ENCODE measurements at regions of chr11 and their contacts with region 1.

Region 1: GRCh38 chr11:128956401-128957201 is 13.9 kb upstream of the TP53AIP1 start:
- DNase-seq: peak; percentile 74
- ATAC-seq: peak; percentile 88
- H3K4me3 ChIP-seq: no peak overlapping the region
- H3K27ac ChIP-seq: peak overlapping the region; percentile 10; the same call in 1 of the 2 replicates
- H3K4me1 ChIP-seq: no peaks in the 10 kb centered on the region
- H3K27me3 ChIP-seq: no peaks in the 10 kb centered on the region
- CTCF ChIP-seq: peak; percentile 80

Region 2: DNA sequence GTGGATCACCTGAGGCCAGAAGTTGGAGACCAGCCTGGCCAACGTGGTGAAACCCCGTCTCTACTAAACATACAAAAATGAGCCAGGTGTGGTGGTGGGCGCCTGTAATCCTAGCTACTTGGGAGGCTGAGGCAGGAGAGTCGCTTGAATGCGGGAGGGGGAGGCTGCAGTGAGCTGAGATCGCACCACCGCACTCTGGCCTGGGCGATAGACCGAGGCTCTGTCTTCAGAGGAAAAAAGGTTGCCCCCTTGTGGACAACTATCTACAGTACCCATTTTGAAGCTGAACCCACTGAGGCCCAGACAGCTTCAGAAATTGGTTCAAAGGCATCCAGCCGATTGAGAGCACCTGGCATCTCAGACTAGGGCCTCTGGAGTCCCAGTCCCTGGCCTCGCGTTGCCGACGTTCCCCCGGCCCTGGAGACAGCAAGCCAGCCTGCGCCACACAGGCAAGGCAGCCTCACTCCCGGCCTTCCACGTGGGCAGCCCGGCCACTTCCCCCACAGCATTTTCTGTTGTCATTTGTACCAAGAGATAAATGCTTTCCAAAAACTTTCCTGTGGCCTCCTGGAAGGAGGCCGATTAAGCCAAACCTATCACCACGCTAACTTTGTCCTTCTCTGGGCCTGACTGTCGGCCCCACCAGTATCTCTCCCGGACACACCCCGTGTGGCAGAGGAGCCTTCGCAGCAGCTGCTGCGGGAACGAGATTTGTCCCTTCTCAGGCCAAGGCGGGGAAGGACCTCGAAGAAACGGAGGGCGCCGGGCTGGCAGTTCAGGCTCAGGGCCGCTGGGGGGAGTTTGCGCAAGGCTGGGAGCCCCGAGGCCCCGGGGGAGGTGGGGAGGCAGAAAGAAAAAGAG is 179.9 kb before region 1 on chr11:
- CTCF ChIA-PET with region 1: interaction called, 16 read pairs
- POLR2A ChIA-PET with region 1: no interaction called
- in situ Hi-C with region 1: no loop called
- intact Hi-C with region 1: no loop called
- DNase-seq: no peak
- ATAC-seq: peak; percentile 82
- H3K4me3 ChIP-seq: no peak overlapping the region
- H3K27ac ChIP-seq: no peak overlapping the region
- H3K4me1 ChIP-seq: no peaks in the 10 kb centered on the region
- H3K27me3 ChIP-seq: no peaks in the 10 kb centered on the region
- CTCF ChIP-seq: peak; percentile 86

Region 3: GRCh38 chr11:128884703-128885338 is 71.8 kb before region 1 on chr11:
- CTCF ChIA-PET with region 1: interaction called, 53 read pairs
- POLR2A ChIA-PET with region 1: no interaction called
- in situ Hi-C with region 1: no loop called
- intact Hi-C with region 1: loop called (anchors 1 kb)
- DNase-seq: peak; percentile 69
- ATAC-seq: peak; percentile 90
- H3K4me3 ChIP-seq: no peak overlapping the region
- H3K27ac ChIP-seq: no peak overlapping the region
- H3K4me1 ChIP-seq: no peaks in the 10 kb centered on the region
- H3K27me3 ChIP-seq: peaks cover 25% of the 10 kb centered on the region
- CTCF ChIP-seq: peak; percentile 93

Region 4: DNA sequence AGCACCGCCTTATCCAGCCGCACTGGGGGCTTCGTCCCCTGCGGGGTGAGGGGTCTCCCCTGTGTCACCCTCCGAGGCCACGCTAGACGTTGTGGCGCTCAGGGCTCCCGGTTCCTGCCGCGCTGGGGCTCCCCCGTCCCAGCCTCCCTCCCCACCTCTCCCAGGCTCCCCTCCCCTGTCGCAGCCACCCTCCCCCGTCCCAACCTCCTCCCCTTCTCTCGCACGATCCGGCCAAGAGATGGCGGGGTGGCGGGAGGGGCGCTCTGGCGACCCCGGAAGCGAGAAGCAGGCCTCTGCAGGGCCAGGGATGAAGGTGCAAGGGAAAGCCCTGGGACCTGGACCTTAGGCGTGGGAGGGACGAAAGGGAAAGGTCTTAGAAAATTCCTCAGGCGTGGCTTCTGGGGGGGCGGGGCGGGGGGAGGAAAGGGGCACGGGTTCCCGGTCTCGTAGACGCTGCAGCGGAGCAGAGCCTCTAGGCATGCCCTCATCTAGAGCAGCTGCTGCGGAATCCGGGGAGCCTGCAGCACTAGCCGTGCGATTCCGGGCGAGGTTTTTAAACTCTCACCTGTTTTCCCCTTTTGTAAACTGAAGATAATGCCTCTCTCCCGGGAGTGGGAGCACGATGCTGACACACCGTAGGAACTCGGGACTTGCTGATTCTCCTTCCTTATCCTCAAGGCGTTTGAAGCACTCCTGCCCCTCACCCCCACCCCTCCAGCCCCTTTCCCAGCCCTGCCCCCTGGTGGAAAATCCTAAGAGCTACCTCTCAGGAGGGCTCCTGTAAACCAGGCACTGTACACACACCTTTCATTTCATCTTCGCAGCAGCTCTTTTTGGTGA is 51.0 kb before region 1 on chr11:
- CTCF ChIA-PET with region 1: interaction called, 10 read pairs
- POLR2A ChIA-PET with region 1: no interaction called
- in situ Hi-C with region 1: no loop called
- intact Hi-C with region 1: no loop called
- DNase-seq: no peak
- ATAC-seq: peak; percentile 83
- H3K4me3 ChIP-seq: peak overlapping the region; percentile 50 to 64
- H3K27ac ChIP-seq: peak overlapping the region; percentile 68
- H3K4me1 ChIP-seq: peaks cover 23% of the 10 kb centered on the region
- H3K27me3 ChIP-seq: peaks cover 2% of the 10 kb centered on the region; the same call in 1 of the 2 replicates
- CTCF ChIP-seq: peak; percentile 86

Region 5: GRCh38 chr11:129331871-129332274 is 375.3 kb after region 1 on chr11:
- CTCF ChIA-PET with region 1: no interaction called
- POLR2A ChIA-PET with region 1: no interaction called
- in situ Hi-C with region 1: no loop called
- intact Hi-C with region 1: loop called (anchors 10 kb)
- DNase-seq: peak; percentile 64
- ATAC-seq: peak; percentile 99
- H3K4me3 ChIP-seq: no peak overlapping the region
- H3K27ac ChIP-seq: peak overlapping the region; percentile 52; the same call in 1 of the 2 replicates
- H3K4me1 ChIP-seq: peaks cover 6% of the 10 kb centered on the region; the same call in 1 of the 2 replicates
- H3K27me3 ChIP-seq: no peaks in the 10 kb centered on the region
- CTCF ChIP-seq: peak; percentile 97

Region 6: GRCh38 chr11:129787518-129788155 is 831.0 kb after region 1 on chr11:
- CTCF ChIA-PET with region 1: no interaction called
- POLR2A ChIA-PET with region 1: no interaction called
- in situ Hi-C with region 1: no loop called
- intact Hi-C with region 1: no loop called
- DNase-seq: no peak
- ATAC-seq: no peak
- H3K4me3 ChIP-seq: no peak overlapping the region
- H3K27ac ChIP-seq: no peak overlapping the region
- H3K4me1 ChIP-seq: no peaks in the 10 kb centered on the region
- H3K27me3 ChIP-seq: peaks cover 9% of the 10 kb centered on the region
- CTCF ChIP-seq: no peak